ENCODE measurements at regions of chr6 and their contacts with region 1.

Region 1: DNA sequence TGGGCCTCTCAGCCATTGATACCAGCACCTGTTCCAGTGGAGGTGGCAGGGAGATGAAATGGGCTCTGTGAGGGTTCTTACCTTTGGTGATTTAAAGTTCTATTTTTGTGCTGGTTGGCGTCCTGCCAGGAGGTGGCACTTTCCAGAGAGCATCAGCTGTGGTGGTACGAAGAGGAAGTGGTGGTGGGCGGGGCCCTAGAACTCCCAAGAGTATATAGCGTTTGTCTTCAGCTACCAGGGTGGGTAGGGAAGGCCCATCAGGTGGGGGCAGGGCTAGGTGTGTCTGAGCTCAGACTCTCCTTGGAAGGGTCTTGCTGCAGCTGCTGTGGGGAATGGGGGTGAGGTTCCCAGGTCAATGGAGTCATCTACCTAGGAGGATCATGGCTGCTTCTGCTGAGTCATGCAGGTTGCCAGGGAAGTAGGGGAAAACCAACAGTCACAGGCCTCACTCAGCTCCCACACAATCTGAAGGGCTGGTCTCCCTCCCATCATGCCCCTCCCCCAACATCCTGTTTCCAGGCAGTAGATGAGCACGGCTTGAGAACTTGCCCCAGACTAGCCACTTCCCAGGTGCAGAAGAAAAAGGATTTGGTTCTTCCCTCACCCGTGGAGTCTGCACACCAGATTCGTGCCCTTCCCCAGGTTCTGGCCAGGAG is 46.6 kb downstream of the MOXD1 start:
- DNase-seq: no peak
- CTCF ChIP-seq: no peak

Region 2: DNA sequence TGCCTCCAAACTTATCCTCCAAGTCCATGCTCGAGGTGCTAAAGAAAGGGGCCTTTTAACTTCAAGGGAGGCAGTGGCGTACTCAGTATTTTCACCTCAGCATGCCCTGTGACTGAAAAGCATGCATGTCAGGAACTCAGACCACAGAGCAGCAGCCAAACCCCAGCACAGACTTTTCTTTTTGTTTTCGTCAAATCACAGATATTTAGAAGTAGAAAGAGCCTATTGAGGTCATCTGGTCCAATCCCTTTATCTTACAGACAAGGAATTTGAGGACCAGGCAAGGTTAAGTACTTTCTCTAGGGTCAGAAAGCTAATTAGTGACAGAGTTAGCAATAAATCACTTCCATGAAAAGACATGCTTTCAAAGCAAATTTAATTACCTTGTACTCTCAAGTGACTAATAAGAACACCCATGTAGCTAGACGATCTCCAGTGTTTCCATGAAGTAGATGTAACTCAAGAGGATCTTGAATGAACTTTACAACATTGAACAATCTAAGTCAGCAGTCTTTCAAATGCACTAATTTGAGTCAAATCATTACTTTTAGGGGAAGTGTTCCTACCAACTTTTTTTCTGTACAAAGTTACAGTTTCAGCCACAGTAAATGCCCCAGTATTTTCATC is 10.8 kb after region 1 on chr6:
- CTCF ChIA-PET with region 1: interaction called, 10 read pairs
- POLR2A ChIA-PET with region 1: no interaction called
- DNase-seq: peak; percentile 58
- CTCF ChIP-seq: no peak

Measured in GM10248 (cell line).